Panc1 (cell line): ENCODE measurements at regions of chr10 and their contacts with region 1.

Region 1: DNA sequence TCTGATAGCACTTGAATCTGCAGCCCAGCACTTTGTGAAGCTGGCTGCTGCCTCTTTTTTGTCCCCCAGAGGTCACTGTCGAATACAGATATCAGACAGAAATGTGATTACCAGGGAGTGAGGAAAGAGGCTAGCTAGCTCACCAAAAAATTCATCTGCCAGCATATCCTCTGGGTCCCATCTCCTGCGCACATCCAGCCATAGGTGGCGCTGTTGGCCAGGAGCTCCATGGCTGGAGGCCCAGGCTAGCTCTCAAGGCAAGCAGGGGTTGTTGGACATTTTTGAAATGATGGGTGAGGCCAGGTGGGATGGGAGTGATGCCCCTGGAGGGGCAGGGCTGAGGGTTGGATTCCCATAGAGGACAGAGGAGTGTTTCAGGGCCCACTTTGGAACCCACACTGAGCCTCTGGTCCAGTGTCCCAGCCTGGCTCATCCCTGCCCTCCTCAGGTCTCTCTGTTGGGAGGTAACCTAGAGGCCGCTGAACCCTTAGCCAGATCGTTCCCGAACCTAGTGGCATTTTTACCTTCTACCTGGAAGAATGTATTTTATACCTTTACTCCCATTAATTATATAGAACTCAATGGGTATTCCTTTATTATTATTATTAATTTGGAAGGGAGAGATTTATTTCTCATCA is 14.8 kb downstream of the DPCD start:
- DNase-seq: peak; percentile 70
- ATAC-seq: peak; percentile 98
- H3K4me3 ChIP-seq: no peak overlapping the region
- H3K27ac ChIP-seq: no peak overlapping the region
- H3K4me1 ChIP-seq: no peaks in the 10 kb centered on the region
- H3K27me3 ChIP-seq: no peaks in the 10 kb centered on the region
- CTCF ChIP-seq: peak; percentile 98

Region 2: GRCh38 chr10:101782811-101783735 is 180.2 kb after region 1 on chr10 and contains the start of gene NPM3:
- CTCF ChIA-PET with region 1: interaction called, 41 read pairs
- POLR2A ChIA-PET with region 1: interaction called, 5 read pairs
- in situ Hi-C with region 1: no loop called
- intact Hi-C with region 1: loop called (anchors 2 kb)
- DNase-seq: peak; percentile 41
- ATAC-seq: peak; percentile 84
- H3K4me3 ChIP-seq: peak within 1 kb of the TSS; percentile 83 to 89
- H3K27ac ChIP-seq: peak within 1 kb of the TSS; percentile 94
- H3K4me1 ChIP-seq: peaks cover 39% of the 10 kb centered on the region
- H3K27me3 ChIP-seq: no peaks in the 10 kb centered on the region
- CTCF ChIP-seq: no peak
- total RNA-seq, gene NPM3: 109 TPM